Caco-2 (cell line): ENCODE measurements at regions of chr1 and their contacts with region 1.

Region 1: DNA sequence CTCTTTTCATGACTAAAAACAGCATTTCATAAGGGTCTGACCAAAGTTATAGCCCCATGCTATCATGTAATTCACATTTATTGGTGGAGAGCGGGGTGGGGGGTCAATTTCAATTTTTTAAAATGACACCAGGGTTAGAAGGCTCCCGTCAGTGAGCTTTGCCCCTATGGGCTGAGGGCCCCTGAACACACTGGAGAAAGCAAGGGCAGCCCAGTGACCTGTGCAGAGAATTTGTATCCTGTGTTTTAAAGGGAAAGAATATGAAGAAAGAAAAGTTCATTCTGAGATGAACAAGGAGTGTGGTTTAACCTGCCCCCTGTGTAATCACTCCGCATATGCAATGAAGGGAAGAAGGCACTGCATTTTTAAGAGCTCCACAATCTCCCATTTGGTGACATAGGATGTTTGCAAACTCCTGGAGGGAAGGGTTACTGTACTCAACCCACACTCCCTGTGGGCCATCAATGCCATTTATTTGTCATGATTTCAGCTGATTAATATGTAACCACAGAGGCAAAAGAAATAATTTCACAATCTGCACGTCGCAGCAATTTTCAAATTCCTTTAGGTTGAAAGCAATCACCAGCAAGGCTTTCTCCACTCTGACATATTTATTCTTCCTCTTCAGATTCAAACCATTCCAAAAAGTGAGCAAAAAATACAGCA is 95.6 kb downstream of the ZNF281 start:
- DNase-seq: peak; percentile 50 to 59
- H3K4me3 ChIP-seq: no peak overlapping the region
- H3K4me3 Mint-ChIP-seq: peak overlapping the region; percentile 52
- H3K27ac Mint-ChIP-seq: peak overlapping the region; percentile 86
- H3K4me1 ChIP-seq: peaks cover 28% of the 10 kb centered on the region
- H3K4me1 Mint-ChIP-seq: peaks cover 19% of the 10 kb centered on the region
- H3K27me3 ChIP-seq: no peaks in the 10 kb centered on the region
- H3K27me3 Mint-ChIP-seq: no peaks in the 10 kb centered on the region
- CTCF ChIP-seq: no peak

Region 2: GRCh38 chr1:199529324-199529723 is 784.9 kb before region 1 on chr1:
- CTCF ChIA-PET with region 1: no interaction called
- POLR2A ChIA-PET with region 1: no interaction called
- intact Hi-C with region 1: no loop called
- DNase-seq: no peak
- H3K4me3 ChIP-seq: no peak overlapping the region
- H3K4me3 Mint-ChIP-seq: no peak overlapping the region
- H3K27ac Mint-ChIP-seq: no peak overlapping the region
- H3K4me1 ChIP-seq: no peaks in the 10 kb centered on the region
- H3K4me1 Mint-ChIP-seq: no peaks in the 10 kb centered on the region
- H3K27me3 ChIP-seq: no peaks in the 10 kb centered on the region
- H3K27me3 Mint-ChIP-seq: no peaks in the 10 kb centered on the region
- CTCF ChIP-seq: no peak

Region 3: GRCh38 chr1:200194477-200194876 is 119.7 kb before region 1 on chr1:
- CTCF ChIA-PET with region 1: no interaction called
- POLR2A ChIA-PET with region 1: no interaction called
- intact Hi-C with region 1: no loop called
- DNase-seq: no peak
- H3K4me3 ChIP-seq: no peak overlapping the region
- H3K4me3 Mint-ChIP-seq: no peak overlapping the region
- H3K27ac Mint-ChIP-seq: no peak overlapping the region
- H3K4me1 ChIP-seq: no peaks in the 10 kb centered on the region
- H3K4me1 Mint-ChIP-seq: no peaks in the 10 kb centered on the region
- H3K27me3 ChIP-seq: no peaks in the 10 kb centered on the region
- H3K27me3 Mint-ChIP-seq: no peaks in the 10 kb centered on the region
- CTCF ChIP-seq: no peak

Region 4: GRCh38 chr1:200296091-200296661 is 18.0 kb before region 1 on chr1:
- CTCF ChIA-PET with region 1: no interaction called
- POLR2A ChIA-PET with region 1: interaction called, 3 read pairs
- intact Hi-C with region 1: loop called (anchors 1 kb)
- DNase-seq: peak; percentile 51 to 61
- H3K4me3 ChIP-seq: no peak overlapping the region
- H3K4me3 Mint-ChIP-seq: peak overlapping the region; percentile 20
- H3K27ac Mint-ChIP-seq: peak overlapping the region; percentile 64
- H3K4me1 ChIP-seq: peaks cover 34% of the 10 kb centered on the region
- H3K4me1 Mint-ChIP-seq: peaks cover 31% of the 10 kb centered on the region
- H3K27me3 ChIP-seq: no peaks in the 10 kb centered on the region
- H3K27me3 Mint-ChIP-seq: no peaks in the 10 kb centered on the region
- CTCF ChIP-seq: no peak

Region 5: GRCh38 chr1:200336111-200336845 is 22.1 kb after region 1 on chr1:
- CTCF ChIA-PET with region 1: no interaction called
- POLR2A ChIA-PET with region 1: no interaction called
- intact Hi-C with region 1: loop called (anchors 1 kb)
- DNase-seq: peak in 1 of 2 experiments; percentile 22
- H3K4me3 ChIP-seq: no peak overlapping the region
- H3K4me3 Mint-ChIP-seq: peak overlapping the region; percentile 38
- H3K27ac Mint-ChIP-seq: peak overlapping the region; percentile 83
- H3K4me1 ChIP-seq: peaks cover 44% of the 10 kb centered on the region
- H3K4me1 Mint-ChIP-seq: peaks cover 35% of the 10 kb centered on the region
- H3K27me3 ChIP-seq: no peaks in the 10 kb centered on the region
- H3K27me3 Mint-ChIP-seq: no peaks in the 10 kb centered on the region
- CTCF ChIP-seq: no peak